Heart right ventricle (tissue), 16 donors: ENCODE measurements at regions of chr13 and their contacts with region 1.

Region 1: DNA sequence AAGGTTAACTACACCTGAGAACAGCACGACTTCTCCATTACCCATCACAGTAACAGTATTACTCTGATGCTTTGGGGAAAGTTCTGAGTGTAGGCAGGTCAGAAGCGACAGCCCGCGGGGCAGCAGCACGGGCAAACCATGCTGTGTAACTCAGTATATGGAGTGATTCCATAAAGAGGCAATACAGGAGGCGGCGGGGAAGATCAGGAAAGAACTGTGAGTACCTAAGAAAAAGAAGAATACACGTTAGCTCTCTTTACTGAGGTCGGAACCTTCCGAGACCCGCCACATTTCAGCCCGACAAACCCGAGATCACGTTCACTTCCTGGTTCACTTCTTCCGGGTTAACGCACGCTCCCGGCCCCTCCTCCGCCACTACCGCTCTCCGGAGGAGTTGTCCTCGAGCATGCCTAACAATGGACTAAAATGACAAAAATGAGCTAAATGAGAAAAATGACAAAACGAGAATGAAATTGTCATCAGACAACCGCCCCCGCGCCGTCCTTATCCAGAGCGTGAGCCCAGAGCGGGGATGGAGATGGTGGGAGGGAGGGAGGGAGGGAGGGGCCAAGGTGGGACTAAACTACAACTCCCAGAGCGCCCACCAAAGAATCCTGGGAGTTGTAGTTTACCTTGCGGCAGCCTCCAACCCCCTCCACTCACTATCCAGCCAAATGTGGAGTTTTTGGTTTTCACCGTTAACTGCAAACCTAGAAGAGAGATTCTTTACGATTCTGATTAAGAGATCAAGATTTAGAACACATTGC is at the start of gene MTRF1:
- DNase-seq: peak; percentile 74 to 85
- ATAC-seq: peak; percentile 96 to 99 (median 97)
- H3K4me3 ChIP-seq: peak within 1 kb of the TSS; percentile 30 to 91 (median 64)
- H3K27ac ChIP-seq: peak within 1 kb of the TSS; percentile 19 to 88 (median 80)
- H3K4me1 ChIP-seq: peaks cover 0 to 13% (median 5%) of the 10 kb centered on the region in 9 donors
- H3K27me3 ChIP-seq: no peaks in the 10 kb centered on the region
- CTCF ChIP-seq: no peak
- total RNA-seq, gene MTRF1: 8.2 to 15.0 (median 10.3) TPM

Region 2: DNA sequence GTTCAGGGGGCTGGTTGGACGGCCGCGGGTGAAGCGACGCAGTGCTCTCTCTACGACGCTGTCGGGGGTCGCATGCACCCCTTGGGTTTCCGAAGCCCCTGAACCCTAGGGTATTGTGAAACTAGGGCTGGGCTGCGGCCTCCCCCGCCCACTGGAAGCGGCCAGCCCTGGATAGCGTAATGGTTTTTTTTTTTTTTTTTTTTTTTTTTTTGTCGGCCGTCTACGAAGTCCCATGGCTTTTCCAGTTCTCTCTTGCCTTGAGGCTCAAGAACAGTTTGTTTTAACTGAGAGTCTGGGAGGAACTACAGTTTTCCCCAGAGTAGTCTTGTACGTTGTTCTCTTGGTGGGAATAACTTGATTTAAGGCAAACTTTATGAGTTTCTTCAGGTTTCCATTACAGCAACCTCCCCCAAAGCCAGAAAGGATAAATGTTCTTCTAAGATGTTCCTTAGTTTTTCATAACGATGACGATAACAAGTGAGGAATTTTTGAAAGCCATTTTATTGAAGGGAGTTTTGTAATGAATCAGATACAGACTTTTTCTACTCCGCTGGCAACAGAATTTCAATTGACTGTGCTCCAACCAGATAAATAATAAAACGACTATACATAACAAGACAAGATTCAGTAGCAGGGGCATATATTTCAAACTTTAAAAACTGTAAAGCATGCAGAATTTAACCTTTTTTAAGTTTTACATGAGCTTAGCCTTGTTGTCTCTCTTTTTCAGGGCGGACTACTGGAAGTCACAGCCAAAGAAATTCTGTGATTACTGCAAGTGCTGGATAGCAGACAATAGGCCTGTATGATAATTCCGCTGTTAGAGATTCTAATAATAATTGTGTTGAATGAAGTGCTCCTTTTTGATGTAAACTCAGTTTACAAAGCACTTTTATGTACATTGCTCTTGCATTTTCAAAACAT is 201.3 kb before region 1 on chr13:
- intact Hi-C with region 1: no loop called
- DNase-seq: no peak
- ATAC-seq: peak; percentile 34 to 68 (median 59)
- H3K4me3 ChIP-seq: peak overlapping the region; percentile 42 to 94 (median 81)
- H3K27ac ChIP-seq: peak overlapping the region; percentile 87 to 98 (median 98)
- H3K4me1 ChIP-seq: peaks cover 0 to 69% (median 63%) of the 10 kb centered on the region in 9 donors
- H3K27me3 ChIP-seq: no peaks in the 10 kb centered on the region
- CTCF ChIP-seq: no peak

Region 3: DNA sequence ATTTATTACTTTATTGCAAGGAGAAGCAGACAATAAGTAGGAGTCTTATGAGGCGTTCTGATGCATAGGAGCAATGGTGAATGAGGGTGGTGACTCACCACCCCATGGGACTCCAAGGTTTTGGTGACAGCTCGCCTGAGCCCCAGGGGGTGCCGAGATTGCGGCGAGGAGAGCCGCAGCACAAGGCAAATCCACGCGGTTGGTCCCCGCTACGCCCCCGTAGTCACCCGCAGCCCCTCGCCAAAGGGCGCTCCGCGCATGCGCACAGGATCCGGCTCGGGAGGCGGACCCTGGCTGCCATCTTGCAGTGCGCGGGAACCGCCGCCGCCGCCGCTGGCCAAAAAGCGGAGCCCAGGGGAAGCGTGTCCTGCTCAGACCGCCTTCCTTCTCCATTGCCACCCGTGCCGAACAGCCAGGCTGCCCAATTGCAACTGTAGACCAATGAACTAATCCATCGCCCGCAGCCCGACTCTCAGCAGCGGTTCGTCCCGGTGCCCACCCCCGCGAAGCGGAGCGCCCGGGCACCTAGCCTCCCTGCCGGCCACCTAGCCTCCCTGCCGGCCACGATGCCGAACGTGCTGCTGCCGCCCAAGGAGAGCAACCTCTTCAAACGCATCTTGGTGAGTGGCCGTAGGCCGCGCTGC is 47.6 kb after region 1 on chr13 and contains the start of gene NAA16:
- intact Hi-C with region 1: loop called in 4 of 10 experiments (anchors 2 to 5 kb)
- DNase-seq: peak; percentile 94 to 96
- ATAC-seq: peak; percentile 96 to 98 (median 96)
- H3K4me3 ChIP-seq: peak within 1 kb of the TSS; percentile 71 to 100 (median 97)
- H3K27ac ChIP-seq: peak within 1 kb of the TSS; percentile 77 to 96 (median 92)
- H3K4me1 ChIP-seq: peaks cover 0 to 46% (median 34%) of the 10 kb centered on the region in 9 donors
- H3K27me3 ChIP-seq: no peaks in the 10 kb centered on the region
- CTCF ChIP-seq: peak in 3 of 9 donors; percentile 6 to 18 (median 9)
- total RNA-seq, gene NAA16: 5.6 to 10.3 (median 8.5) TPM

Region 4: GRCh38 chr13:41352935-41353840 is 89.7 kb after region 1 on chr13:
- intact Hi-C with region 1: no loop called
- DNase-seq: peak in 1 of 2 donors; percentile 13
- ATAC-seq: peak in 6 of 8 donors; percentile 36 to 59 (median 54)
- H3K4me3 ChIP-seq: no peak overlapping the region
- H3K27ac ChIP-seq: peak overlapping the region in 1 of 10 donors; percentile 5
- H3K4me1 ChIP-seq: peaks cover 0 to 40% (median 0%) of the 10 kb centered on the region in 9 donors
- H3K27me3 ChIP-seq: no peaks in the 10 kb centered on the region
- CTCF ChIP-seq: peak; percentile 78 to 90 (median 83)